Upper lobe of right lung (tissue), 1 donor: ENCODE measurements at regions of chr14 and their contacts with region 1.

Region 1: GRCh38 chr14:61329478-61330051 is 8.2 kb downstream of the PRKCH start:
- DNase-seq: no peak
- ATAC-seq: peak; percentile 71
- H3K4me3 ChIP-seq: no peak overlapping the region
- H3K27ac ChIP-seq: peak overlapping the region; percentile 53
- H3K4me1 ChIP-seq: peaks cover 51% of the 10 kb centered on the region
- H3K27me3 ChIP-seq: no peaks in the 10 kb centered on the region
- CTCF ChIP-seq: no peak

Region 2: DNA sequence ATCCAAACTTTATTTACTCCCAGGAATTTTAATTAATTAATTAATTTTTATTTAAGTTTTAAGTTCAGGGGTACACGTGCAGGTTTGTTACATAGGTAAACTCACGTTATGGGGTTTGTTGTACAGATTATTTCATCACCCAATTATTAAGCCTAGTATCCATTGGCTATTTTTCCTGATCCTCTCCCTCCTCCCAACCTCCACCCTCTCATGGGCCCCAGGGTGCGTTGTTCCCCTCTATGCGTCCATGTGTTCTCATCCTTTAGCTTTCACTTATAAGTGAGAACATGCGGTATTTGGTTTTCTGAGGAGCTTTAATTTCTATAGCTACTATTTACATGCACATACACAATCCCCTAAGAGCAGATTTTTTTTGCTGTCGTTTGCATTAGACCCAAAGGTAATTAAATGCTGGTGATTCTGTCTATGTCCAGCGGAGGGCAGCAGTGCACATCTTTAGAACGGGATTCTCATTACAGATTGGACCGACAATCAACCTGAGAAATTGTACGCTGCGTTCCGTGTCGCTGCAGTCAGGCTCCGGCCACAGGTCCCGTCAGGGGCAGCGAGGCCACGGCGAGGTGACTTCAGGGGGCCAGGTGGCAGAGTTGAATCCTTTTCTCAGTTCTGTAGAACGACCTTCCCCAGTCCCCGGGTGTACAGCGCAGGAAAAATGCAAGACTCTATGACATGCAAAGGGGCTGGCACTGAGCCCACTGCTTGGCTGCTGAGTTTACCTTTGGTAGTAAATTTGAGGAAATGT is 60.1 kb before region 1 on chr14:
- intact Hi-C with region 1: no loop called
- DNase-seq: peak; percentile 80
- ATAC-seq: peak; percentile 97
- H3K4me3 ChIP-seq: peak overlapping the region; percentile 46
- H3K27ac ChIP-seq: no peak overlapping the region
- H3K4me1 ChIP-seq: no peaks in the 10 kb centered on the region
- H3K27me3 ChIP-seq: peaks cover 24% of the 10 kb centered on the region
- CTCF ChIP-seq: peak; percentile 76

Region 3: GRCh38 chr14:61444215-61444768 is 114.7 kb after region 1 on chr14:
- intact Hi-C with region 1: loop called (anchors 10 kb)
- DNase-seq: no peak
- ATAC-seq: peak; percentile 88
- H3K4me3 ChIP-seq: no peak overlapping the region
- H3K27ac ChIP-seq: no peak overlapping the region
- H3K4me1 ChIP-seq: peaks cover 33% of the 10 kb centered on the region
- H3K27me3 ChIP-seq: no peaks in the 10 kb centered on the region
- CTCF ChIP-seq: no peak